A673 (cell line): ENCODE measurements at regions of chr17 and their contacts with region 1.

Region 1: DNA sequence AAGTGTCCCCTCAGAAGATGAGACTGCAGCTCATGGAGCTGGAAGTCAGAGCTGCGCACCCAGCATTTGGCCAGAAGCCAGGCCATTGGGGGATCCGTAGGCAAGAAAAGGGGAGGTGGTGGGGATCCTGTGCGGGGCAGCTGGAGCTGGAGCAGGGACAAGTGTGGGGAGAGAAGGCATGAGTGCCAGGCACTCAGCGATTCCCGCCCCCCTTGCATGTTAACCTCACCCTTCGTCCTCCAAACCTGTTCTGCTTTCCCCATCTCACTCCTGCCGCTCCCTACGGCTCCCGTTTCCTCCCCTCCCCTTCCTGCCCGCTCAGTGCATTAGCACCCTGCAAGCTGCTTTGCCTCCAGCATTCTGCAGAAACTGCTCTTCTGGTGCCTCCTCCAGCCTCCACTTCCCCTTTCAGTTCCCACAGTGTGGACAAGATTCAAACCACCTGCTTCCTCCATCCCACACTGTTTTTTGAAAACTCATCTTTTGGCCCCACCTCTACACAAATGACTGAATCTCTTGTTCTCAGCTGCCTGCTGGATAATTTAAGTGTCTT is 5.6 kb downstream of the ALOX15 start:
- DNase-seq: no peak
- H3K4me3 ChIP-seq: no peak overlapping the region
- H3K27ac ChIP-seq: no peak overlapping the region
- H3K4me1 ChIP-seq: no peaks in the 10 kb centered on the region
- H3K27me3 ChIP-seq: peaks cover 40% of the 10 kb centered on the region
- CTCF ChIP-seq: no peak

Region 2: DNA sequence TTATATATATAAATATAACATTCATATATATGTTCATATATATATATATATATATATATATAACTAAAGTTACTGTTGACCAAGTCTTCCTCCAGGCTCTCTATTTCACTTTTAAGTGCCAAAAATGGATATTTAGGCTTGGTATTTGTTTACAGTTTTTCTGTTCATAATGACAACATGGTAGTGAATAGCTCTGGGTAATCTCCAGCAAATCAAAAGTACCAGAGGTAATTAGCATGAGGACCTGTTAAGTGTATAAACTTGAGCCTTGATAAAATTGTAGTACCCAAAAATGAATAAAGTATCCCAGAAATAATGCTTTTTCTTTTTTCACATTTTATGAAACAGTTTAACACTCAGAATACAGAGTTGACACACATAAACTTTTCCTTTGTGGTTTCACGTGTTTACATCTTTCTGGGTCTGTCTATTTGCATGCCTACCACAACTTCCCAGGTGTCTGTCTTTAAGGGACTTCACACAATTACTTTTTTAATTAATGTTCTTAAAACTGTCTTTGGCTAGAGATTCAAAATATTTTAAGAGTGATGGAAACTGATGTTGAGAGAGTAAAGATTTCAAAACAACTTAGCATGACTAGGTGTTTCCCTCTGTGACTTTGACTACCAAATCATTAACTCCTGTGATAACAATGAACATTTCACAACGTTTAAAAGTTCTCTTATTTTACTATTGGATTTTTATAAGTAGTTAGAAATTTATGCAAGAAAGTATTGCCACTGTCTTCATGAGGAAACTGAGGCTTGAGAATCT is 694.1 kb after region 1 on chr17:
- CTCF ChIA-PET with region 1: no interaction called
- POLR2A ChIA-PET with region 1: interaction called, 14 read pairs
- intact Hi-C with region 1: no loop called
- DNase-seq: no peak
- H3K4me3 ChIP-seq: no peak overlapping the region
- H3K27ac ChIP-seq: no peak overlapping the region
- H3K4me1 ChIP-seq: no peaks in the 10 kb centered on the region
- H3K27me3 ChIP-seq: no peaks in the 10 kb centered on the region
- CTCF ChIP-seq: no peak